A549 (cell line): ENCODE measurements at regions of chr3 and their contacts with region 1.

Region 1: DNA sequence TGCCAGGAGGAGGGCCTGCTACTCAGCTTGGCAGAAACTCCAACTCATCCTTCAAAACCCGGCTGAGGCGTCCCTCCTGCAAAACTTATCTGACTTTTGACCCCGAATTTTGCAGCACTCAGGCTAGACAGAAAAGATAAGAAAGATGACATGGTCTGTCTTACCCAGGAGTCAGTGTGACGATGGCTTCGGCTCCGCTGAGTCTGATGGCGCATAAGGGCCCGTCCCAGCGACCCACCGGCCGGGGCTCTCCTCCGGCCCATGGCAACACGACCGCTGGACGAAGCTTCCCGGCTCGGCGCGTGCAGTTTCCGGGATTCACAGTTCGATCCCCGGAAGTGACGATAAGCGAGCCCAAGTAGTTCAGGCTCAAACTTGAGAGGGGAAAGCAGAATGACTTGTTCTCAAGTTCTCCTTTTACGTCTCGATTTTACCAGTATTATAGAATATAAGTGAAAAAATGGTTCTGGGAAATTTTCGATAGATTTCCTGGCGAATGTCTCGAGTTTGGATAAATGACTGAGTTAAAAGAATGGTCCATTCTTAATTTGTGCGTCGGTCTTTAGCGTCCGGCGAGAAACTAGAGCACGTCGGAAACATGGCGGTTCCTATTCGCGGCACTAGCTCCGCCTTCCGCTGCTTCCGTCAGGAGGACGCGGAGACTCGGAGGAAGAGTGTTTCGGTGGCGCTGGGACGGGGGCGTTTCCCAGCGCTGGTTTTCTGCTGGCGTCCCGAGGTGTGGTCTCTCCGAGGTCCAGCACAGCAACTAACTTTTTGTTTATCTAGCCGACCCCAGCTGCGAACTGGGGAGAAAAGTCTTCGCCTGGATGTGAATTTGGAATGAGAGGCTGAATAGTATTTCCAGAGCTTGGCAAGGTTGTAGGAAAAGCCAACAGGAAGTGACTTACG is at the start of gene LSG1:
- DNase-seq: peak; percentile 69 to 94
- ATAC-seq: peak; percentile 94 to 97
- H3K4me3 ChIP-seq: peak within 1 kb of the TSS; percentile 92
- H3K27ac ChIP-seq: peak within 1 kb of the TSS; percentile 86 to 90
- H3K4me1 ChIP-seq: peaks cover 13% of the 10 kb centered on the region; the same call in 2 of the 3 replicates
- CTCF ChIP-seq: no peak
- EP300 ChIP-seq: no peak
- POLR2A ChIP-seq: peak; percentile 62
- RAD21 ChIP-seq: no peak
- polyA plus RNA-seq, gene LSG1: 70.3 and 77.1 TPM in 2 replicates

Region 2: DNA sequence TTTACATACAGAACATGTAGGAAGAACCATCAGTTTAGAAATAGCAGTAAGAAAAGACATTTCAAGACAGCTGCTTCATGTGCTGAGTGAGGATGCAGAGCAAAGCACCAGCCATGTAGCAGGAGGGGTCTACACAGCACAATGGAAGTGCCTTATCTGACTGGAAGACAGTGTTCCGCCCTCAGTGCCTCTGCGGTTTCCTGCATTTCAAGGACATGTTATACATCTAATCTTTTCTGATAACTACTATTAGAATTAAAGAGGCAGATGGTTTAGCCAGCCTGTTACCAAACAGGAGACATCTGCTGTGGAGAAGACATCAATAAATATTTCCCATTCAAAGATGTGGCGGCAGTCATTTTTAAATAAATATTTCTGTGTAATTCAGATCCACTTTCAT is 10.8 kb before region 1 on chr3:
- CTCF ChIA-PET with region 1: interaction called, 20 read pairs
- POLR2A ChIA-PET with region 1: interaction called, 5 read pairs
- DNase-seq: no peak
- ATAC-seq: no peak
- H3K4me3 ChIP-seq: no peak overlapping the region
- H3K27ac ChIP-seq: no peak overlapping the region
- H3K4me1 ChIP-seq: no peaks in the 10 kb centered on the region
- CTCF ChIP-seq: no peak
- EP300 ChIP-seq: no peak
- POLR2A ChIP-seq: no peak
- RAD21 ChIP-seq: no peak

Region 3: DNA sequence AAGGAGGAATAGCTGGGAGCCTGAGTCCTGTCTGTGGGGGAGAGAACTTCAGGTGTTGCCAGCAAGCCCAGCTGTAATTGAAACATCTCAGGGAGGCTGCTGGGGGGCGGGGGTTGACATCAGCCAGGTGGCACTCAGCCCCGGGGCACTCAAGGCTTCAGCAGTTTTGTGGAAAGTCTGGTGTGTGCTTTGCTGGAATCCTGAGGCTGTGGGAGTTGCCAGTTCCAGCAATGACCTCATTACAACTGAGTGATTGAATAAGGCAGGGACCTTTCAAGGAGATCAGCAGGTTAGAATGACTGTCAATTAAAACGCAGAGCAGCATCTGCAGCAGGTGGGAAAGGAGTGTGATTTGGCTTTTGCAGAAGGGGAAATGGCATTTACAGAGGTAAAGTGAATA is 89.2 kb after region 1 on chr3:
- CTCF ChIA-PET with region 1: no interaction called
- POLR2A ChIA-PET with region 1: no interaction called
- DNase-seq: no peak
- ATAC-seq: no peak
- H3K4me3 ChIP-seq: no peak overlapping the region
- H3K27ac ChIP-seq: no peak overlapping the region
- H3K4me1 ChIP-seq: no peaks in the 10 kb centered on the region
- CTCF ChIP-seq: no peak
- EP300 ChIP-seq: no peak
- POLR2A ChIP-seq: no peak
- RAD21 ChIP-seq: no peak

Region 4: DNA sequence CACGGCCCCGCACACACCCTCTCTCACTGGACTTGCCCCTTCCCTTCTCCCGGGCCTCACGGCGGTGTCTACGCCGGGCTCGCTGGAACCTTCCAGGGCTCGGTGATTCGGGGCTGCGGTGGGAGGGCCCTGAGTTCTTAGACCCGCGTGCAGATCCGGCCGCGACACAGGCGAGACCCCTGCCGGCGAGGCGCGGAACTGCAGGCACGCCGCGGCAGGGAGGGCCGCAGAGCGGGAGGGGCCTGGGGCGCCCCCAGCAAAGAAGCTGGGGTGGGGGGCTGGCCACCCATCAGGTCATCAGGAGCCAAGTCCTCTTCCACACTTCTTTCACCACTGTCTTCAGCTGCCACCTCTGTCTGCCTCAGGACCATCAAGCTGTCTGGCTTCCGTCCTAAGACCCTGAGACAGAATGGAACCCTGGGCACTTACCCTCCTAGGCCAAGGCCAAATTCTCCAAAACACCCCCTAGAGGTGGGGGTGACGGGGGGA is 434.3 kb after region 1 on chr3:
- CTCF ChIA-PET with region 1: interaction called, 14 read pairs
- POLR2A ChIA-PET with region 1: no interaction called
- DNase-seq: peak; percentile 34 to 39
- ATAC-seq: peak; percentile 74 to 91
- H3K4me3 ChIP-seq: no peak overlapping the region
- H3K27ac ChIP-seq: peak overlapping the region in 1 of 2 experiments; percentile 54; a peak in 2 of 6 replicates
- H3K4me1 ChIP-seq: peaks cover 46% of the 10 kb centered on the region
- CTCF ChIP-seq: peak; percentile 77
- EP300 ChIP-seq: no peak
- POLR2A ChIP-seq: no peak
- RAD21 ChIP-seq: peak; percentile 82 to 85

Region 5: GRCh38 chr3:195259475-195260279 is 587.5 kb after region 1 on chr3:
- CTCF ChIA-PET with region 1: interaction called, 23 read pairs
- POLR2A ChIA-PET with region 1: interaction called, 8 read pairs
- DNase-seq: peak; percentile 54 to 72
- ATAC-seq: peak; percentile 75 to 77
- H3K4me3 ChIP-seq: peak overlapping the region; percentile 65
- H3K27ac ChIP-seq: peak overlapping the region; percentile 89 to 94
- H3K4me1 ChIP-seq: peaks cover 7% of the 10 kb centered on the region; the same call in 1 of the 3 replicates
- CTCF ChIP-seq: peak; percentile 91
- EP300 ChIP-seq: no peak
- POLR2A ChIP-seq: no peak
- RAD21 ChIP-seq: peak; percentile 25 to 90; a peak in 4 of 5 replicates